GM12878 (cell line): ENCODE measurements at regions of chr3 and their contacts with region 1.

Region 1: GRCh38 chr3:122258757-122259371 is 66.2 kb upstream of the CSTA start:
- DNase-seq: peak; percentile 83
- ATAC-seq: peak; percentile 86
- H3K4me3 ChIP-seq: no peak overlapping the region
- H3K27ac ChIP-seq: peak overlapping the region; percentile 5; the same call in 1 of the 2 replicates
- H3K4me1 ChIP-seq: peaks cover 5% of the 10 kb centered on the region; the same call in 1 of the 2 replicates
- H3K27me3 ChIP-seq: no peaks in the 10 kb centered on the region
- CTCF ChIP-seq: peak; percentile 75 to 91 (median 88)
- EP300 ChIP-seq: peak; percentile 19 to 58; a peak in 1 of 4 replicates
- POLR2A ChIP-seq: no peak
- RAD21 ChIP-seq: peak; percentile 97

Region 2: DNA sequence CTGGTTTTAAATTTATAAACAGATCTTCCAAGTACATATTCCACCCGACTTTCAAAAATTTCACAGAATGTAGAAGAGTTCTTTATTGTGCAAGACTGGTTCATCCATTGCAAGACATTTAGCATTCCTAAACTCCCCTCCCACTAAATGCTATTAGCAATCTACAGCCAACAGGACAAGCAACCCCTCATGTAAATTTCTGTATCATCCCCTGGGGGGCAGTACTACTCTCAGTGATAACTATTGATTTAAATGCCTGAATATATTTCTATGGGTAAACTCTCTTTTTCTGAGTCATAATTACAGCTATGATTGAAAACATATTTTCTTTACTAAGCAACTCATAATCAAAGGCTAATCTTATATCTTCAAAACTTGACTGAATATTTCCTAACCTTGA is 375.4 kb before region 1 on chr3:
- CTCF ChIA-PET with region 1: interaction called, 14 read pairs
- POLR2A ChIA-PET with region 1: no interaction called
- RAD21 ChIA-PET with region 1: interaction called, 3 read pairs
- SMC1A ChIA-PET with region 1: interaction called, 11 read pairs
- in situ Hi-C with region 1: no loop called
- intact Hi-C with region 1: loop called (anchors 10 kb)
- DNase-seq: no peak
- ATAC-seq: peak; percentile 73
- H3K4me3 ChIP-seq: no peak overlapping the region
- H3K27ac ChIP-seq: no peak overlapping the region
- H3K4me1 ChIP-seq: no peaks in the 10 kb centered on the region
- H3K27me3 ChIP-seq: no peaks in the 10 kb centered on the region
- CTCF ChIP-seq: peak; percentile 21 to 38 (median 27); a peak in 1 of 6 replicates
- EP300 ChIP-seq: no peak
- POLR2A ChIP-seq: no peak
- RAD21 ChIP-seq: peak; percentile 48

Region 3: DNA sequence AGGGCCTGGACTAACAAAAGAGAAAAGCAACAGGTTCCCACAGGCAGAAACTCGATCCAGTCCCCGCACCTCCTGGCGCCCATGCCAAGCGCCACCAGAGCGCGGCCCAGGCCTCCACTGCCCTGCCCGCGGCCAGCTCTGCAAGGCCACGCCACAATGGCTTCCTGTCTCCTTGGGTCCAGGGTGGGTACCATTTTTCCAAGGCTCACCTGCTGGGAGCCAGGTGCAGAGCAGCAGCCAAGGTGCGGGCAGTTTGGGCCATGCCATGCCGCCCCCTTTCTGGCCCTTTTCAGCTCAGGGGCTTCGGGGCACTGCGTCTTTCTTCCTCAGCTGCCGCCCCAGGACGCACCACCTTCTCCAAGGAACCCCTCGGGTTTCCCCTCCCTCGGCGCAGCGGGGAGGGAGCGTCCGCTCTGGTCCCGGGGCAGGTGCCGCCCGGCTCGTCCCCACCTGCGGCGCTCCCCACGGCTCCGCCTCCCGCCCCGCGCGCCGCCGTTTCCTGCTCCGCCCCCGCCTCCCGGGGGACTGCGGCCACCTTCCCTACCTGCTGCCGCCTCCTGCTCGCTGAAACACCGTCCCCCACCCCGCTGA is 237.0 kb before region 1 on chr3 and contains the start of gene ILDR1:
- CTCF ChIA-PET with region 1: interaction called, 9 read pairs
- POLR2A ChIA-PET with region 1: interaction called, 4 read pairs
- RAD21 ChIA-PET with region 1: interaction called, 9 read pairs
- SMC1A ChIA-PET with region 1: interaction called, 16 read pairs
- in situ Hi-C with region 1: no loop called
- intact Hi-C with region 1: no loop called
- DNase-seq: no peak
- ATAC-seq: peak; percentile 55
- H3K4me3 ChIP-seq: peak within 1 kb of the TSS; percentile 72
- H3K27ac ChIP-seq: peak within 1 kb of the TSS; percentile 65
- H3K4me1 ChIP-seq: peaks cover 49% of the 10 kb centered on the region
- H3K27me3 ChIP-seq: no peaks in the 10 kb centered on the region
- CTCF ChIP-seq: no peak
- EP300 ChIP-seq: no peak
- POLR2A ChIP-seq: peak; percentile 60; the same call in 1 of the 2 replicates
- RAD21 ChIP-seq: no peak
- polyA plus RNA-seq, gene ILDR1: 1.3 to 1.8 TPM

Region 4: DNA sequence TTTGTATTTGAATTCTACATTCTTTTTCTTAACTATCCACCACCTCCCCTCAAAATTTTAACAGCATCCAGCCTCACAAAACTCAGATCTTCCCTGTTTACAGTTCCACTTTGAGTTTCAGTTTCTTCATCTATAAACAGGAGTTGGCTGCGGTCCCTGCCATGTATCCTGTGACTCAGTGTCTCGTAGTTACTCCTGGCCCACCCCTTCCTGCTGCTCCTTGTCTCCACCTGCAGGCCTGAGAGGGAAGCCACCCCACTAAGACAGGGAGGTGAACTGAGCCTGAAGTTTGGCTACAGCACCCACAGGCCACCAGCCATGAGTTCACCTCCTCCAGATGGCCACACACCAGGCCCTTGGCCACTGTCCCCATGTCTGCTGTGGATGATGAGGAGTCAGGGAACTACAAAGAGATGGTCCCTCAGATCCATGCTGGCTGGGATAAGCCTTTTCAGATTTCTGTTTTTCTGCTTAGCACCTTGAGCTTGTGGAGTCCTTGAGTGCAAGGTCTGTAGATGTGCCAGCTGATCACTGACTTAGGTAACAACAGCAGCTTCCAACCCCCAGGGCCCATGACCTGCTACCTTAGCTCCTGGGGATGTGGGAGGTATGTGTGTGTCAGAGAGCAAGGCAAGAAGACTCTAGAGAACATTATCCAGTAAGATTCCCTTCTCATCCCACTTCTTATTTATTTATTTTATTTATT is 166.3 kb before region 1 on chr3:
- CTCF ChIA-PET with region 1: interaction called, 6 read pairs
- POLR2A ChIA-PET with region 1: interaction called, 3 read pairs
- RAD21 ChIA-PET with region 1: interaction called, 5 read pairs
- SMC1A ChIA-PET with region 1: interaction called, 590 read pairs
- in situ Hi-C with region 1: no loop called
- intact Hi-C with region 1: no loop called
- DNase-seq: no peak
- ATAC-seq: peak; percentile 80
- H3K4me3 ChIP-seq: no peak overlapping the region; the same call in 1 of the 2 replicates
- H3K27ac ChIP-seq: peak overlapping the region; percentile 59
- H3K4me1 ChIP-seq: peaks cover 59% of the 10 kb centered on the region
- H3K27me3 ChIP-seq: no peaks in the 10 kb centered on the region
- CTCF ChIP-seq: peak; percentile 60 to 84 (median 80)
- EP300 ChIP-seq: no peak
- POLR2A ChIP-seq: no peak
- RAD21 ChIP-seq: peak; percentile 76

Region 5: DNA sequence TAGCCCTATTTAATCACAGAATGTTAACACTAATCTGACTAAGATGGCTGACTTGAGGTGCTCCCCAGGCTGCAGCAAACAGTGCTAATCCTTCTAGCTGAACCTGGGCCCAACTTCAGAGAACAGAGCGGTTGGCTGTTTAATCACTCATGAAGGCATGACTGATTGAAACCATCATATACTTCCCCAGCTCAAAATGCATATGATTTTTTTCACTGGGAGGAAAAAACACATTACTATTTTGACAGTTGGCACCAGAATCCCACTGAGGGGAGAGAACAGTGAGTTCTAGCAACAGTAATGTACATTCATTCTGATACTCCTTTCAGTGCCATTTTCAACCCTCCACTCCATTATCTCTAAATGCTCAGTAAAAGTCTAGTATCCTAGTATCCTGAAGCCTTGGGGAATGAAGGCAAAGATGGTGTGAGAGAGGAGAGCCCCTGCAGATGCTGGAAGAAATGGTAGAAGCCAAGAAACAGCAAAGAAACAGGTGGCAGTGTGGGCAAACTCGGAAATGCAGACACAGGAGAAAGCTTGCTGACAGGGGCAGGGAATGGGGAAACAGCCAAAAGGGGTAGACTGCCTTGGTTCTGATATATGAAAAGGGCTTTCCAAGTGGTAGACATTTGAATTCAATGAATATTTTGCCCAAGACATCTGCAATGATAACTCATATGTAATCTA is 109.8 kb before region 1 on chr3:
- CTCF ChIA-PET with region 1: interaction called, 12 read pairs
- POLR2A ChIA-PET with region 1: no interaction called
- RAD21 ChIA-PET with region 1: no interaction called
- SMC1A ChIA-PET with region 1: interaction called, 3 read pairs
- in situ Hi-C with region 1: no loop called
- intact Hi-C with region 1: no loop called
- DNase-seq: no peak
- ATAC-seq: peak; percentile 32
- H3K4me3 ChIP-seq: no peak overlapping the region
- H3K27ac ChIP-seq: no peak overlapping the region
- H3K4me1 ChIP-seq: peaks cover 2% of the 10 kb centered on the region; the same call in 1 of the 2 replicates
- H3K27me3 ChIP-seq: no peaks in the 10 kb centered on the region
- CTCF ChIP-seq: no peak
- EP300 ChIP-seq: no peak
- POLR2A ChIP-seq: no peak
- RAD21 ChIP-seq: no peak

Region 6: DNA sequence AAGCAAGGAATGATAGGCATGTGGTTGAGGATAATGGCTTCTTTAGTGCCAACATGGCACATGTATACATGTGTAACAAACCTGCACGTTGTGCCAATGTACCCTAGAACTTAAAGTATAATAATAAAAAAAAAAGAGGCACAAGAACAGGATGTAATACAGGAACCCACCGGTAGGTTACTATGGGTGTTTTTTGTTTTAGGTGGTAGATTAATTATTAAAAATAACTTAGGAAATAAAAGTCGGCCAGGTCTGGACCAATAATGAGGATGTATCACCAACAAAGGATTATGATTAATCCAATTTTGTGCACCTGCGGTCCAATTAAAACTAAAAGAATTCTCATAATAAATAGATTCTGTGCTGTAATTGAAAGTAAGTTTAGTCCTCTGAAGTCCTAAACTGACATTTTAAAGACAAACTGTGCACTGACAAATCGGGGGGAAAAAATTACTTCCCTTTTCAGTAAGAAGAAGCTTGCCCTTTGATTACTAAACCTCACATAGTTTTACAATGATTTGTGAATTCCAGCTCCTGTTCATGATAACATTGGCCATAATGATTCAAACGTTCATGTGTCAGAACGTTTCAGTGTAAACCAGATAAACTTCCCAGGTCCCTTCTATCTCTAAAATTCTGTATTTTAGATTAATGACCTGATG is 13.2 kb before region 1 on chr3:
- CTCF ChIA-PET with region 1: interaction called, 15 read pairs
- POLR2A ChIA-PET with region 1: interaction called, 9 read pairs
- RAD21 ChIA-PET with region 1: interaction called, 9 read pairs
- SMC1A ChIA-PET with region 1: interaction called, 24 read pairs
- in situ Hi-C with region 1: no loop called
- intact Hi-C with region 1: no loop called
- DNase-seq: no peak
- ATAC-seq: peak; percentile 51
- H3K4me3 ChIP-seq: peak overlapping the region; percentile 66
- H3K27ac ChIP-seq: peak overlapping the region; percentile 63
- H3K4me1 ChIP-seq: peaks cover 14% of the 10 kb centered on the region
- H3K27me3 ChIP-seq: no peaks in the 10 kb centered on the region
- CTCF ChIP-seq: peak in 2 of 3 experiments; percentile 23 to 28; a peak in 2 of 6 replicates
- EP300 ChIP-seq: no peak
- POLR2A ChIP-seq: no peak
- RAD21 ChIP-seq: no peak

Region 7: DNA sequence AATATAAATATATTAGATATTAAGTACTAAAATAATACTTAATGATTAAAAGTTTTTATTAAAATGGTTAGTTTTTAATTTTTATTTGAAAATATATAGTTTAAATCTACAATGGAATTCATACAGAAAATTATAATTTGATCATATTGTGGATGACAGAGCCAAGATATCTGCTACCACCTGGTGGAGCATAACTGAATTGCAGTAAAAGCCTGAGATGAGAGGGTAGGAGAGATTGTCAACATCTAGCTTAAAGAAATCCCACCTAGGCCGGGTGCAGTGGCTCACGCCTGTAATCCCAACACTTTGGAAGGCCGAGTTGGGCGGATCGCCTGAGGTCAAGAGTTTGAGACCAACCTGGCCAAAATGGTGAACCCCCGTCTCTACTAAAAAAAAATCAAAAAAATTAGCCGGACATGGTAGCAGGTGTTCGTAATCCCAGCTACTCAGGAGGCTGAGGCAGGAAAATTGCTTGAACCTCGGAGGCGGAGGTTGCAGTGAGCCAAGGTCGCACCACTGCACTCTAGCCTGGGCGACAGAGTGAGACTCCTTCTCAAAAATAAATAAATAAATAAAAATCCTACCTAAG is 41.1 kb after region 1 on chr3:
- CTCF ChIA-PET with region 1: interaction called, 37 read pairs
- POLR2A ChIA-PET with region 1: interaction called, 8 read pairs
- RAD21 ChIA-PET with region 1: interaction called, 41 read pairs
- SMC1A ChIA-PET with region 1: interaction called, 204 read pairs
- in situ Hi-C with region 1: no loop called
- intact Hi-C with region 1: loop called (anchors 1 kb)
- DNase-seq: no peak
- ATAC-seq: peak; percentile 23; the same call in 1 of the 3 replicates
- H3K4me3 ChIP-seq: no peak overlapping the region
- H3K27ac ChIP-seq: peak overlapping the region; percentile 86
- H3K4me1 ChIP-seq: peaks cover 53% of the 10 kb centered on the region
- H3K27me3 ChIP-seq: no peaks in the 10 kb centered on the region
- CTCF ChIP-seq: peak; percentile 52 to 59 (median 57)
- EP300 ChIP-seq: no peak
- POLR2A ChIP-seq: no peak
- RAD21 ChIP-seq: peak; percentile 84